ENCODE measurements at regions of chr14 and their contacts with region 1.

Region 1: DNA sequence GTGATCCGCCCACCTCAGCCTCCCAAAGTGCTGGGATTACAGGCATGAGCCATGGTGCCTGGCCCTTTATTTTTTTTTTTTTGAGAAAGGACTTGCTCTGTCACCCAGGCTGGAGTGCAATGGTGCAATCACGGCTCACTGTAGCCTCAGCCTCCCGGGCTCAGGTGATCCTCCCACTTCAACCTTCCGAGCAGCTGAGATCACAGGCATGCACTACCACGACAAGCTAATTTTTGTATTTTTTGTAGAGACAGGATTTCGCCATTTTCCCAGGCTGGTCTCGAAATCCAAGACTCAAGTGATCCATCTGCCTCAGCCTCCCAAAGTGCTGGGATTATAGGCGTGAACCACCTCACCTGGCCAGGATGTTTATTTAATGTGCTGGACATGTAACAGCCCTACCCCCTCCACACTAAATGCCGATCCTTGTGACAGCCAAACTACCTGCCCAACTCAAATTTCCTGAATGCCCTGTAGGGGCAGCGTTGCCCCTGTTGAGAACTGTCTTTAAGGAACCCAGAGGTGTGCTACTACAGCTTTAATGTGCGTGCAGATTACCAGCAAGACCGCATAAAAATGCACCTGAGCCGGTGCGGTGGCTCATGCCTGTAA is 48.0 kb downstream of the KCNK13 start:
- DNase-seq: peak; percentile 13 to 51
- H3K4me3 ChIP-seq: no peak overlapping the region
- H3K27ac ChIP-seq: no peak overlapping the region
- H3K4me1 ChIP-seq: no peaks in the 10 kb centered on the region
- H3K27me3 ChIP-seq: no peaks in the 10 kb centered on the region
- CTCF ChIP-seq: peak; percentile 58 to 77 (median 61)
- EP300 ChIP-seq: no peak
- POLR2A ChIP-seq: no peak
- RAD21 ChIP-seq: peak; percentile 60 to 73

Region 2: DNA sequence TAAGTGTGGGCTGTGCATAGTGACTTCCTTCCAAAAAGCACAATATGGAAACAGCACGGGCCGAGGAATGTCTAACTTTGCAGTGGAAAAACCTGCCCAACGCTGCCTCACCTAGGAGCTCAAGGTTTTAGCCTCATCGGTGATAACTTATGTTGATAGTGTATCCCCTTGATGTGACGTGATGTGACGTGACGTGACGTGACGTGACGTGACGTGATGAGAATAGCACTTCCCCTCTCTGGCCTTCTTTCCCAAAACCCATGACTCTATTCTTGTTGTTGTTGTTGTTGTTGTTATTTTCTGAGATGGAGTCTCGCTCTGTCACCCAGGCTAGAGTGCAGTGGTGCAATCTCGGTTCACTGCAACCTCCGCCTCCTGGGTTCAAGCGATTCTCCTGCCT is 16.5 kb after region 1 on chr14:
- CTCF ChIA-PET with region 1: interaction called, 18 read pairs
- POLR2A ChIA-PET with region 1: no interaction called
- DNase-seq: no peak
- H3K4me3 ChIP-seq: no peak overlapping the region
- H3K27ac ChIP-seq: no peak overlapping the region
- H3K4me1 ChIP-seq: no peaks in the 10 kb centered on the region
- H3K27me3 ChIP-seq: no peaks in the 10 kb centered on the region
- CTCF ChIP-seq: no peak
- EP300 ChIP-seq: no peak
- POLR2A ChIP-seq: no peak
- RAD21 ChIP-seq: no peak

Region 3: GRCh38 chr14:90235179-90235976 is 125.6 kb after region 1 on chr14:
- CTCF ChIA-PET with region 1: interaction called, 20 read pairs
- POLR2A ChIA-PET with region 1: no interaction called
- DNase-seq: peak; percentile 77 to 95
- H3K4me3 ChIP-seq: no peak overlapping the region; a peak in 2 of 8 replicates
- H3K27ac ChIP-seq: no peak overlapping the region
- H3K4me1 ChIP-seq: no peaks in the 10 kb centered on the region; a peak in 1 of 7 replicates
- H3K27me3 ChIP-seq: peaks cover 4 to 11% (median 7%) of the 10 kb centered on the region in 4 experiments
- CTCF ChIP-seq: peak; percentile 77 to 90 (median 87)
- EP300 ChIP-seq: no peak
- POLR2A ChIP-seq: no peak
- RAD21 ChIP-seq: peak; percentile 94 to 95

Measured in H1 (cell line).